ENCODE measurements at regions of chr1 and their contacts with region 1.

Region 1: GRCh38 chr1:173429471-173430402 is 47.4 kb upstream of the PRDX6 start:
- DNase-seq: peak; percentile 80
- ATAC-seq: peak; percentile 88
- H3K4me3 Mint-ChIP-seq: peak overlapping the region; percentile 60
- H3K27ac Mint-ChIP-seq: peak overlapping the region; percentile 86
- H3K4me1 Mint-ChIP-seq: peaks cover 31% of the 10 kb centered on the region
- H3K27me3 Mint-ChIP-seq: no peaks in the 10 kb centered on the region

Region 2: GRCh38 chr1:173444757-173445156 is 15.0 kb after region 1 on chr1:
- CTCF ChIA-PET with region 1: interaction called, 32 read pairs
- POLR2A ChIA-PET with region 1: no interaction called
- DNase-seq: peak; percentile 44
- ATAC-seq: peak; percentile 93
- H3K4me3 Mint-ChIP-seq: peak overlapping the region; percentile 47
- H3K27ac Mint-ChIP-seq: peak overlapping the region; percentile 63
- H3K4me1 Mint-ChIP-seq: peaks cover 25% of the 10 kb centered on the region
- H3K27me3 Mint-ChIP-seq: no peaks in the 10 kb centered on the region

Region 3: GRCh38 chr1:173507205-173507846 is 77.6 kb after region 1 on chr1:
- CTCF ChIA-PET with region 1: interaction called, 25 read pairs
- POLR2A ChIA-PET with region 1: no interaction called
- DNase-seq: no peak
- ATAC-seq: no peak
- H3K4me3 Mint-ChIP-seq: no peak overlapping the region
- H3K27ac Mint-ChIP-seq: no peak overlapping the region
- H3K4me1 Mint-ChIP-seq: no peaks in the 10 kb centered on the region
- H3K27me3 Mint-ChIP-seq: peaks cover 2% of the 10 kb centered on the region

Region 4: DNA sequence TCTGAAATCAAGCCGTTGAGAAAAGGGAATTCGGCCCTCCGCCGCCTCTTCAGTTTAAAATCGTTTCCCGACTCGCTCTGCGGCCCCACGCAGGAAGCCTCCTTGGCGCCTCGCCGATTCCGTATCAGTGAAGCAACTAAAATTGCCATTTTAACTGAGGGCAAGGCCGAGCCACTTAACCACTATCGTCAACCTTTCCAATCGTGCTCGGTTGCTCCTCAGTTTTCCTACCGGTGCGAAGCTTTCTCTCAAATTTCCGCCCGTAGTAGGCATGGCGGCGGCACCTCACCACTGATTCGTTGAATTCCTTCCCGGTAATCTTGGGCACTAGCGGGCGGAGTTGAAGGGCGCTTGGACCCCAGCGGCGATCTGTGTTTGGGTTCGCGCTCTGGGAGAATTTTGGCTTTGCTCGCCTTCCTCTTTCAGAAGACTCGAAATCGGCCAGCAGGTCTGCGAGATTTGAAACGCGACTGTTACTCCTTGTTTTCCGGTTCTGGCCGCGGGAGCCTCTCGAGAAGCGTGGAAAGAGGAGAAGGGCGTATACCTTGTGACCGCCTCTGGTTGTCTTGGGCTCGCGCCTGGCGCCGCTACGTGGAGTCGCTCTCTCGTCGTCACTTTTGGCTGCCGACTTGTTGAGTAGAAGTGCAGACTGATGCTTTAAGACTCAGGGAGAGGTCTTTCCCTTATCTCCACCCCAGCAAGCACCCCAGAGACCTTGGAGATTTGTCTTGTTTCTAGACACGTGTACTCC is 394.8 kb after region 1 on chr1 and contains the starts of genes CENPL and DARS2:
- CTCF ChIA-PET with region 1: interaction called, 63 read pairs
- POLR2A ChIA-PET with region 1: interaction called, 6 read pairs
- DNase-seq: peak; percentile 95
- ATAC-seq: peak; percentile 89
- H3K4me3 Mint-ChIP-seq: peak within 1 kb of the TSS; percentile 86
- H3K27ac Mint-ChIP-seq: peak within 1 kb of the TSS; percentile 98
- H3K4me1 Mint-ChIP-seq: peaks cover 56% of the 10 kb centered on the region
- H3K27me3 Mint-ChIP-seq: no peaks in the 10 kb centered on the region
- total RNA-seq, gene CENPL: 35.5 to 39.2 TPM
- total RNA-seq, gene DARS2: 32.7 to 35.7 TPM

Measured in activated CD8-positive, alpha-beta T cell treated with anti-CD3 and anti-CD28 coated beads, Interleukin-2, amount 10 ng/mL, durations not matched to agents 7 days and 5 days (primary cell).